ENCODE measurements at regions of chr1 and their contacts with region 1.

Region 1: DNA sequence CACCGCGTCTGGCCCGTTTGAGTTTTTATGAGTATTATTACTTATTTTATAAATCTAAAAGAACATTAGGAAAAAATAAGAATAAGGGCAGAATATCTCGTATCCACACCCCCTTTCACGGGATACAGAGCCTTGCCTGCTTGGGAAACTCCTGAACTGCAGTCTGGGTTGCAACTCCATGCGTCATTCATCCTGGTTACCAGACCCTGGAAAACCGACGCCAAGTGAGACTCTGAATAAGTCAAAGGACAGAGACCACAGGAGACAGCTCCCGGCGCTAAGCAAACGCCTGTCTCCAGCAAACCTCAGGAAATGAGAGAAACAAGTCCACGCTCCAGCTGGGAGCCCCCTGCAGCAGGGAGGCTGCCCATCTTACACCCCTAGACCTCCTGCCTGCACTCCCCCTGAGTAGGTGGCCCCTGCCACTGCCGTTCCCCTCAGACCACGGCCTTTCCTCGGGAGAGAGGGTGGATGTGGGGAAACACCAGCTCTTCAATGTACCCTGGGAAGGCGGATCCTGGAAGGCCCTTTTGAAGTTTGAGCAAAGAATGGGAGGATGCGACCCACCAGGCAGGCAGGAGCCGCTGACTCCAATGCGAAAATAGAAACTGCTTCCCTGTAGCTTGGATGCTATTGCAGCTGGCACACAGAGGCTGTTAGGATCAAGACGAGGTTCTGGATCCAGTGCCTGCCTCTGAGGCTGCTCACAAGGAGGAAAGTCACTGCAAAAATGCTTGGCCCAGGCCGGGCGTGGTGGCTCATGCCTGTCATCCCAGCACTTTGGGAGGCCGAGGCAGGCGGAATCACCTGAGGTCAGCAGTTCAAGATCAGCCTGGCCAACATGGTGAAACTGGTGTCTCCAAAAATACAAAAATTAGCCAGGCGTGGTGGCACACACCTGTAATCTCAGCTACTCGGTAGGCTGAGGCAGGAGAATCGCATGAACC is 37.7 kb upstream of the GPR157 start:
- DNase-seq: no peak
- H3K4me3 ChIP-seq: no peak overlapping the region
- H3K27ac ChIP-seq: no peak overlapping the region
- H3K27me3 ChIP-seq: no peaks in the 10 kb centered on the region
- CTCF ChIP-seq: no peak

Region 2: GRCh38 chr1:9302745-9303524 is 136.4 kb after region 1 on chr1:
- CTCF ChIA-PET with region 1: no interaction called
- POLR2A ChIA-PET with region 1: no interaction called
- DNase-seq: peak; percentile 82
- H3K4me3 ChIP-seq: no peak overlapping the region
- H3K27ac ChIP-seq: peak overlapping the region; percentile 89
- H3K27me3 ChIP-seq: no peaks in the 10 kb centered on the region
- CTCF ChIP-seq: no peak

Region 3: GRCh38 chr1:9671377-9672140 is 505.0 kb after region 1 on chr1:
- CTCF ChIA-PET with region 1: no interaction called
- POLR2A ChIA-PET with region 1: interaction called, 10 read pairs
- DNase-seq: peak; percentile 68
- H3K4me3 ChIP-seq: no peak overlapping the region
- H3K27ac ChIP-seq: peak overlapping the region; percentile 80
- H3K27me3 ChIP-seq: no peaks in the 10 kb centered on the region
- CTCF ChIP-seq: no peak